ENCODE measurements at regions of chr16 and their contacts with region 1.

Region 1: DNA sequence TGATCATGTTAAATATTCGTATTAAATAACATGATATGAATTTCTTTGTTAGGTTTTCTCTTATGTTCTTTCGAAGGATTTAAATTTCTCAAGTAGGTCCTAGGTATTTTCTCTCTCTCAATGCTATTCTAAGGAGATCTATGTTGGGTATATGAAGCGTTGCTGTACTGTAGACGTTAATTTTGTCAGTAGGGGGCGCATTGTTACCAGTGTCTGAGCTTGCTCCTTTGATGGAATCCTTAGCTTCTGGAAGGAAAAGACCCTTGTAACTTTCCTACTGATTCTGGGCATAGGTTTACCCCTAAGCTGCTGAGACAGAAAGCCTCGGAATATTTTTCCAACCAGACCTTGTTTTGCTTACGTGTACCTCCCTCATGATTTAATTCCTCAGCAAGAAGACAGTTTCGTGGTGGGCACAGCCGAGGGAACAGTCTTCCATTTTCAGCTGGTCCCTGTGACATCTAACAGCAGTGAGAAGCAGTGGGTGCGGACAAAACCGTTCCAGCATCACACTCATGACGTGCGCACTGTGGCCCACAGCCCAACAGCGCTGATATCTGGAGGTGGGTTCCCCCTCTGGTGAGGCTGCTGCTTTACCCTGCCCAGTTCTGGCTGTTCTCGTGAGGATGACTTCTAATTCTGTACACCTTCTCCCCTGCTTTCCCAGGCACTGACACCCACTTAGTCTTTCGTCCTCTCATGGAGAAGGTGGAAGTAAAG is 17.9 kb downstream of the UTP4 start:
- DNase-seq: peak; percentile 88
- H3K4me3 Mint-ChIP-seq: no peak overlapping the region
- H3K27ac Mint-ChIP-seq: no peak overlapping the region
- H3K4me1 Mint-ChIP-seq: peaks cover 2% of the 10 kb centered on the region
- H3K27me3 Mint-ChIP-seq: no peaks in the 10 kb centered on the region

Region 2: GRCh38 chr16:68814516-68814915 is 335.8 kb before region 1 on chr16:
- intact Hi-C with region 1: no loop called
- DNase-seq: no peak
- H3K4me3 Mint-ChIP-seq: no peak overlapping the region
- H3K27ac Mint-ChIP-seq: no peak overlapping the region
- H3K4me1 Mint-ChIP-seq: peaks cover 2% of the 10 kb centered on the region
- H3K27me3 Mint-ChIP-seq: no peaks in the 10 kb centered on the region

Region 3: GRCh38 chr16:68902008-68902968 is 248.0 kb before region 1 on chr16:
- intact Hi-C with region 1: no loop called
- DNase-seq: peak; percentile 72
- H3K4me3 Mint-ChIP-seq: no peak overlapping the region
- H3K27ac Mint-ChIP-seq: no peak overlapping the region
- H3K4me1 Mint-ChIP-seq: no peaks in the 10 kb centered on the region
- H3K27me3 Mint-ChIP-seq: no peaks in the 10 kb centered on the region

Region 4: DNA sequence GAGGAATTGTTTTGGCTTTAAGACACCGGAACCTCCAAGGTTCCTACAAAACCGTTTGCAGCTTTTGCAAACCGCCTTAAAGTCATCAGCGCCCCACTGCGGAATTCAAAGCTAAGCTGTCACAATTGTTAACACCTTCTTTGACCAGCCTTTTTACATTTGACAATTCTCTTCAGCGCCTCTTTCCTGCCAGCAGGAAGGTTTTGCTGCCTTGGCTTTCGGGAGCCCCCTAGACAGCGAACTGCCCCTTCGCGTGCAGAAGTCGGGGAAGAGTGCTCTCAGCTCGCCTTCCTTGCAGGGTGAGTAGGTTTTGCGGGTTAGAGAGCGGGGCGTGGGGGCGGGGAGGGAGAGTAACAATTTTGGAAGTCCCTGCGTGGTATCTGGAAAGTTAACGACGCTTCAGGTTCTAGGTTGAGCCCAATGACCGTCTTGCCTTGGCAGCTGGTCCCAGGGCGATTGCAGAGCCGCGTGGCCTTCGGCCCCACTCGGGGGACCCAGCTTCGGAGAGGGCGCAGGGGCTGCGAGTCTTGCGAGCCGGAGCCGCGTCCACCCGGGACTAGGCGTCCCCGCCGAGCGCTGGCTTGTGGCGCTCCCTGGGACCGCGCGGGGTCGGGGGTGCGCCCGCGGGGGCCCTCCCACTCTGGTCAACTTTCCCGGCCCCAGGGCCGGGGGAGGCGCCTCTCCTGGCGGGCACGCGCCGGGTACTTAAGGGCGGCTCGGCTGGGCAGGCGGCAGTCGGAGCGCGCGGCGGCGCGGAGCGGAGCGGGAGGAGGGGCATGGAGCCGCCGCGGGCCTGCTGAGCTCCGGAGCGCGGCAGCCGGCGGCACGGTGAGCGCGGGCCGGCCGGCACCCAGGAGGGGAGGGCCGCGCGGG is 44.6 kb before region 1 on chr16 and contains the start of gene HAS3:
- intact Hi-C with region 1: no loop called
- DNase-seq: peak; percentile 81
- H3K4me3 Mint-ChIP-seq: peak within 1 kb of the TSS; percentile 90
- H3K27ac Mint-ChIP-seq: peak within 1 kb of the TSS; percentile 58
- H3K4me1 Mint-ChIP-seq: peaks cover 13% of the 10 kb centered on the region
- H3K27me3 Mint-ChIP-seq: peaks cover 41% of the 10 kb centered on the region
- total RNA-seq, gene HAS3: 0.56 and 0.64 TPM in 2 replicates

Region 5: GRCh38 chr16:69286941-69287713 is 136.8 kb after region 1 on chr16:
- intact Hi-C with region 1: loop called (anchors 1 kb)
- DNase-seq: peak; percentile 84
- H3K4me3 Mint-ChIP-seq: no peak overlapping the region
- H3K27ac Mint-ChIP-seq: no peak overlapping the region
- H3K4me1 Mint-ChIP-seq: no peaks in the 10 kb centered on the region
- H3K27me3 Mint-ChIP-seq: no peaks in the 10 kb centered on the region

Region 6: DNA sequence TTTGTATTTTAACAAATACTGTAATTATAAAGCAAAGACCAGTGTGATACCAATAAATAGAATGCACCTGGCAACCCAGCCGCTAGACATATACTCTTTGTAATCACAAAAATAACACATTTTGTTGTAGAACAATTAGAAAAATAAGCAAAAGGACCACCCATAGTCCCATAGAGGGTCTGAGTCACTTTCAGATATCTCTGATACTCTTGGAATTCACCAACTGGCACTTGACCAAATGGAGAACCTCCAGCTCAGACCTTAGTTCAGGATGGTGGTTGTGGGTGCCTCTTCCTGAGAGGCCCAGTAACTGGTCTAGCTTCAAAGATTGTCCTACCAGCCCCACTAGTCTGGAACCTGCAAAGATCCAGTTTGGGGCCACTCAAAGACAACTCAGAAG is 236.3 kb after region 1 on chr16:
- intact Hi-C with region 1: no loop called
- DNase-seq: no peak
- H3K4me3 Mint-ChIP-seq: no peak overlapping the region
- H3K27ac Mint-ChIP-seq: peak overlapping the region; percentile 87
- H3K4me1 Mint-ChIP-seq: peaks cover 21% of the 10 kb centered on the region
- H3K27me3 Mint-ChIP-seq: no peaks in the 10 kb centered on the region